ENCODE measurements at regions of chr17 and their contacts with region 1.

Region 1: DNA sequence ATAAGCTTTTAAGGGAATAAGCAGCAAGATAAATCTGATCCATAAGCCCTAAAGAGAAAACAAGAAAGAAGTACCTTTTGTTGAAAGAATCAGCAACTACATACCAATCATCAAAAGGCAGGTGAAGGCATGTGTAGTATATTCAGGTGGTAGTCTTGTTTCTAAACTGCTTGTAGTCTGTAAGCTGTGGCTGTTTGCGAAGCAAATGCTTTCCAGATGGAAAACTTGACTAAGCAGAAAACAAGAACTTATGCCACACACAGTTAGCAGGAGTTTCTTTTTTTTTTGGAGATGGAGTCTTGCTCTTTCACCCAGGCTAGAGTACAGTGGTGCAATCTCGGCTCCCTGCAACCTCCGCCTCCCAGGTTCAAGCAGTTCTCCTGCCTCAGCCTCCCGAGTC is 5.7 kb downstream of the CBX1 start:
- DNase-seq: no peak
- H3K4me3 ChIP-seq: no peak overlapping the region
- H3K27ac ChIP-seq: no peak overlapping the region
- H3K4me1 ChIP-seq: peaks cover 8% of the 10 kb centered on the region
- H3K27me3 ChIP-seq: no peaks in the 10 kb centered on the region
- CTCF ChIP-seq: no peak
- POLR2A ChIP-seq: no peak

Region 2: DNA sequence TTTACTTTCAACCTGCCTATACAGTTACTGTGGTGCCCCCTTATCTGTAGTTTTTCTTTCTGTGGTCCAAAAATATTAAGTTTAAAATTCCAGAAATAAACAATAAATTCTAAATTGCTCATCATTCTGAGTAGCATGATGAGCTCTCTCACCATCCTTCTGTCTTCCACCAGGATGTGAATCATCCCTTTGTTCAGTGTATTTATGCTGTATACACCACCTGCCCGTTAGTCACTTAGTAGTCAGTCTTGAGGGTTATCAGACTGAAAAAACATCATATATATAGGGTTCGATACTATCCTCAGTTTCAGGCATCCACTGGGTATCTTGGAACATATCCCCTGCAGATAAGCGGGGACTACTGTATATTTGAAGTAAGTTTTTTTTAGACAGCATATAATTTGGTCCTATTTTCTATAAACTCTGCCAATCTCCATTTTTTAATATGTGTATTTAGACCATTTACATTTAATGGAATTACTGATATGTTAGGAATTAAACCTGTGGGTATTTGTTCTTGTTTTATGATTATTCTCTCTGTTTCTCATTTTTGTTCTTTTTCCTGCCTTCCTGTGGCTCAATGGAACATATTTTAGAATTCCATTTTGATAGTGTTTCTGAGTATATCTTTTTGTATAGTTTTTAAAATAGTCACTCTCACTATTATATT is 331.6 kb before region 1 on chr17:
- CTCF ChIA-PET with region 1: no interaction called
- POLR2A ChIA-PET with region 1: no interaction called
- dilution Hi-C with region 1: no loop called
- intact Hi-C with region 1: no loop called
- DNase-seq: no peak
- H3K4me3 ChIP-seq: no peak overlapping the region
- H3K27ac ChIP-seq: no peak overlapping the region
- H3K4me1 ChIP-seq: no peaks in the 10 kb centered on the region
- H3K27me3 ChIP-seq: peaks cover 3% of the 10 kb centered on the region in 2 experiments
- CTCF ChIP-seq: no peak
- POLR2A ChIP-seq: no peak

Region 3: GRCh38 chr17:48030531-48030930 is 65.1 kb before region 1 on chr17:
- CTCF ChIA-PET with region 1: interaction called, 44 read pairs
- POLR2A ChIA-PET with region 1: interaction called, 3 read pairs
- dilution Hi-C with region 1: no loop called
- intact Hi-C with region 1: loop called (anchors 2 kb)
- DNase-seq: no peak
- H3K4me3 ChIP-seq: no peak overlapping the region
- H3K27ac ChIP-seq: no peak overlapping the region
- H3K4me1 ChIP-seq: peaks cover 8% of the 10 kb centered on the region
- H3K27me3 ChIP-seq: no peaks in the 10 kb centered on the region
- CTCF ChIP-seq: no peak
- POLR2A ChIP-seq: no peak

Region 4: GRCh38 chr17:48084932-48085444 is 10.6 kb before region 1 on chr17:
- CTCF ChIA-PET with region 1: interaction called, 44 read pairs
- POLR2A ChIA-PET with region 1: no interaction called
- dilution Hi-C with region 1: no loop called
- intact Hi-C with region 1: no loop called
- DNase-seq: no peak
- H3K4me3 ChIP-seq: no peak overlapping the region
- H3K27ac ChIP-seq: no peak overlapping the region
- H3K4me1 ChIP-seq: peaks cover 4% of the 10 kb centered on the region
- H3K27me3 ChIP-seq: no peaks in the 10 kb centered on the region
- CTCF ChIP-seq: no peak
- POLR2A ChIP-seq: no peak

Region 5: GRCh38 chr17:48107168-48108132 is 11.8 kb after region 1 on chr17 and contains the start of gene SNX11:
- CTCF ChIA-PET with region 1: interaction called, 14 read pairs
- POLR2A ChIA-PET with region 1: no interaction called
- dilution Hi-C with region 1: no loop called
- intact Hi-C with region 1: no loop called
- DNase-seq: peak; percentile 89
- H3K4me3 ChIP-seq: peak within 1 kb of the TSS; percentile 56 to 99 (median 92)
- H3K27ac ChIP-seq: peak within 1 kb of the TSS; percentile 68
- H3K4me1 ChIP-seq: peaks cover 10% of the 10 kb centered on the region
- H3K27me3 ChIP-seq: no peaks in the 10 kb centered on the region
- CTCF ChIP-seq: no peak
- POLR2A ChIP-seq: peak; percentile 82
- total RNA-seq, gene SNX11: 23.4 and 26.4 TPM in 2 replicates

Region 6: DNA sequence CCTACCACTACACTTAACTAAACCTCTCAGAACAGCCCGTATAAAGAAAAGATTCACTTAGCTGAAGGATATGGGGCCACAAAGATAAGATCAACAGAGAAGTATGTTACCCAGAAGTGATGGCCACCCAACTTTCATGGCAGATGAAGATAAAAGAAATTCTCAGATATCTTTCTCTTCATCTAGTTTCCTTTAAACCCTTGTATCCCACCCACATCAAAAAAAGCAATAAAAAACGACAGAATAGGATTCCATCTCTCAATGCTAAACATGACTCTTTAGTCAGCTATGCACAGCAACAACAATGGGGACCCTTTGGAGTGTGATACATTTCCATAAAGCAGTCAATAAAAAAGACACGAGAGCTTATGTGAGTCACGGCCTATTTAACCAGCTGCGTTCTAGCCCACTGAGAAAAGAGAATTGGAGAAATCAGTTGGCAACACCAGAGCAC is 98.5 kb after region 1 on chr17:
- CTCF ChIA-PET with region 1: no interaction called
- POLR2A ChIA-PET with region 1: no interaction called
- dilution Hi-C with region 1: no loop called
- intact Hi-C with region 1: no loop called
- DNase-seq: peak; percentile 51
- H3K4me3 ChIP-seq: no peak overlapping the region
- H3K27ac ChIP-seq: peak overlapping the region; percentile 26
- H3K4me1 ChIP-seq: peaks cover 7% of the 10 kb centered on the region
- H3K27me3 ChIP-seq: peaks cover 0 to under 1% of the 10 kb centered on the region in 2 experiments
- CTCF ChIP-seq: no peak
- POLR2A ChIP-seq: no peak

Measured in endothelial cell of umbilical vein (primary cell).